PC-9 (cell line): ENCODE measurements at regions of chr10 and their contacts with region 1.

Region 1: DNA sequence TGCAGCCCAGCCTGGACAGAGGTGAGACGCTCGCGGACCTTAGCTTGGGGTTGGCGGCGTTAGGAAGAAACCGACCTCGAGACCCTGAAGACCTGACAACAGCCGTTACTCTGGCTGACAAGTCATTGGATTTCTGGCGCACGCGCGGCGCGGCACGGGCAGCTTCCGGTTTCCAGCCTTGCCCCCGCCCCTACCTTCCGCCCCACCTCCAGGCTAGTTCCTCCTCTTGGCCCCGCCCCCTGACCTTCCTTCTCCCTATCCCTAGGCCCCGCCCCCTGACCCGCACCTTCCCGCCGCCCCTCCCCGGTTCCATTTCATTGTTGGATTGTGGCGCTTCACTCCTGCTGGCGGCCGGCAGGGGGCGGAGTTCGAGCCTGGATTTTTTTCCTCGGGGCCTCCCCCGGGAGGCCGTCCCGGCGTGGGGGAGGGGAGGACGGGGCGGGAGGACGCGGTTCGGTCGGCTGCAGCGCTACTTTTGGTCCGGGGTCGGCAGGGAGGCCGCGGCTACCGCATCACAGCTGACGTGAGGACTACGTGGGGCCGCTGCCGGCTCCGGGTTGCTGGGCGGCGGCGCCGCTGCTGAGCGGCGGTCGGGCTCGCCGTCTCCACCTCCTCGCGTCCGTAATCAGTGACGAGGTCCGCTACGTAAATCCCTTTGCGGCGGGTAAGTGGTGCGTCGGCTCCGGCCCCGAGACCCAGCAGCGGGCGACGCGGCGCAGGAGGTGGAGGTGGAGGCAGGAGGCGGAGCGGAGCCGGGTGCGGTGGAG is at the start of gene CREM:
- DNase-seq: peak; percentile 73 to 97
- H3K4me3 ChIP-seq: peak within 1 kb of the TSS; percentile 90
- H3K27ac ChIP-seq: peak within 1 kb of the TSS; percentile 88
- H3K4me1 ChIP-seq: peaks cover 16% of the 10 kb centered on the region
- H3K27me3 ChIP-seq: no peaks in the 10 kb centered on the region
- CTCF ChIP-seq: peak; percentile 86
- total RNA-seq, gene CREM: 25.6 and 28.3 TPM in 2 replicates

Region 2: GRCh38 chr10:35011771-35012191 is 114.9 kb before region 1 on chr10:
- CTCF ChIA-PET with region 1: no interaction called
- POLR2A ChIA-PET with region 1: no interaction called
- intact Hi-C with region 1: no loop called
- DNase-seq: peak in 1 of 2 experiments; percentile 9
- H3K4me3 ChIP-seq: no peak overlapping the region
- H3K27ac ChIP-seq: no peak overlapping the region
- H3K4me1 ChIP-seq: peaks cover 4% of the 10 kb centered on the region; the same call in 1 of the 2 replicates
- H3K27me3 ChIP-seq: no peaks in the 10 kb centered on the region
- CTCF ChIP-seq: no peak

Region 3: GRCh38 chr10:35195361-35196306 is 68.9 kb after region 1 on chr10:
- CTCF ChIA-PET with region 1: interaction called, 10 read pairs
- POLR2A ChIA-PET with region 1: no interaction called
- intact Hi-C with region 1: loop called (anchors 2 kb)
- DNase-seq: peak; percentile 50 to 73
- H3K4me3 ChIP-seq: peak overlapping the region; percentile 50; the same call in 1 of the 2 replicates
- H3K27ac ChIP-seq: peak overlapping the region; percentile 61
- H3K4me1 ChIP-seq: peaks cover 12% of the 10 kb centered on the region; the same call in 1 of the 2 replicates
- H3K27me3 ChIP-seq: no peaks in the 10 kb centered on the region
- CTCF ChIP-seq: peak; percentile 85

Region 4: DNA sequence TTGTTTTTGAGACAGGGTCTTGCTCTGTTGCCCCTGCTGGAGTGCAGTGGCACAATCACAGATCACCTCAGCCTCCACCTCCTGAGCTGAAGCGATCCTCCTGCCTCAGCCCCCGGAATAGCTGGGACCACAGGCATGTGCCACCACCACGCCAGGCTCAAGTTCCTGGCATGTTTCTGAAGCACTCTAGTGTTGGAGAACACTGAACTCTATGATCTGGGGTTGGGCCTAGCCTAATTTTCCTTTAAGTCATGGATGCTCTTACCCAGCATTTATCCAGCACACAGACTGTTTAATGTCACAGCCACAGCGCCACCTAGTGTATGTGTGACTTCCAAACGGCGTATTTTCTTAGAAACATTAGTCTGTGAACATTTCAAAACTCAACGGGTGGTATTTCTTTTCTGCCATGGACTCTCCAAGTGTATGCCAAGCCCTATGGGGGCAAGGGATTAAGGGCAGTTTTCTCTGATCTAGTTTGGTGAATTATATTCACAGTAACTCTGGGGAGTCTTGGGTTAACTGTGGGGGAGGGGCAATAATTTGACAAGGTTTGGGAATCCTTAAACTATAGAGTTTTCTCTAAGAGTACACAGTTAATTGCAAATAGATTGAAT is 91.7 kb after region 1 on chr10:
- CTCF ChIA-PET with region 1: interaction called, 10 read pairs
- POLR2A ChIA-PET with region 1: no interaction called
- intact Hi-C with region 1: loop called (anchors 2 kb)
- DNase-seq: peak; percentile 56 to 66
- H3K4me3 ChIP-seq: no peak overlapping the region
- H3K27ac ChIP-seq: no peak overlapping the region
- H3K4me1 ChIP-seq: no peaks in the 10 kb centered on the region
- H3K27me3 ChIP-seq: no peaks in the 10 kb centered on the region
- CTCF ChIP-seq: peak; percentile 83

Region 5: GRCh38 chr10:35353805-35354204 is 227.1 kb after region 1 on chr10:
- CTCF ChIA-PET with region 1: no interaction called
- POLR2A ChIA-PET with region 1: interaction called, 12 read pairs
- intact Hi-C with region 1: no loop called
- DNase-seq: no peak
- H3K4me3 ChIP-seq: no peak overlapping the region
- H3K27ac ChIP-seq: no peak overlapping the region
- H3K4me1 ChIP-seq: no peaks in the 10 kb centered on the region
- H3K27me3 ChIP-seq: no peaks in the 10 kb centered on the region
- CTCF ChIP-seq: no peak

Region 6: DNA sequence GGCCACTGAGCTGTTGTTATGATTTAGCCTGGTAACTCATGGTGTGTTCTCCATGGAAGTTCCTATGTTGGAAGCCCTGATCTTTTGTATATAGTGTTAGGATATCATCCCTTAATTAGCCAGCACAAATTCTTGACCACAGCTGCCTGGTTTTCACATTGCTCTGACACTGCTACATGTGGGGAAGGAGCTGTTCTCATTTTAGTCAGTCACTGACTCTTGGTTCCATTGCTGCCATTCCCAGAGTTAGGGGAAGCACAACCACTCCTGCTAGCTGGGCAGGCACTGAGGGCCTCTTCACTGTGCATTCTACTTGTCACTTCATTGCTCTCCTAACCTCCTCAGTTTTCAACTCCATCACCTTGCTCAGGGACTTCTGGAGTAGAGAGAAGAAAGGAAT is 380.0 kb after region 1 on chr10:
- CTCF ChIA-PET with region 1: no interaction called
- POLR2A ChIA-PET with region 1: no interaction called
- intact Hi-C with region 1: loop called (anchors 5 kb)
- DNase-seq: no peak
- H3K4me3 ChIP-seq: no peak overlapping the region
- H3K27ac ChIP-seq: no peak overlapping the region
- H3K4me1 ChIP-seq: no peaks in the 10 kb centered on the region
- H3K27me3 ChIP-seq: no peaks in the 10 kb centered on the region
- CTCF ChIP-seq: no peak

Region 7: GRCh38 chr10:36779234-36779846 is 1652.6 kb after region 1 on chr10:
- CTCF ChIA-PET with region 1: no interaction called
- POLR2A ChIA-PET with region 1: no interaction called
- intact Hi-C with region 1: loop called (anchors 10 kb)
- DNase-seq: no peak
- H3K4me3 ChIP-seq: no peak overlapping the region
- H3K27ac ChIP-seq: no peak overlapping the region
- H3K4me1 ChIP-seq: no peaks in the 10 kb centered on the region
- H3K27me3 ChIP-seq: peaks cover 18% of the 10 kb centered on the region
- CTCF ChIP-seq: peak; percentile 46

Region 8: GRCh38 chr10:36888929-36889573 is 1762.3 kb after region 1 on chr10:
- CTCF ChIA-PET with region 1: no interaction called
- POLR2A ChIA-PET with region 1: no interaction called
- intact Hi-C with region 1: loop called (anchors 5 kb)
- DNase-seq: peak in 1 of 2 experiments; percentile 16
- H3K4me3 ChIP-seq: no peak overlapping the region
- H3K27ac ChIP-seq: no peak overlapping the region
- H3K4me1 ChIP-seq: no peaks in the 10 kb centered on the region
- H3K27me3 ChIP-seq: no peaks in the 10 kb centered on the region
- CTCF ChIP-seq: peak; percentile 22; the same call in 1 of the 2 replicates